AG04450 (cell line): ENCODE measurements at regions of chr5 and their contacts with region 1.

Region 1: GRCh38 chr5:174424219-174425053 is 299.9 kb upstream of the MSX2 start:
- DNase-seq: no peak
- H3K4me3 ChIP-seq: no peak overlapping the region
- H3K27ac ChIP-seq: no peak overlapping the region
- H3K27me3 ChIP-seq: peaks cover 2% of the 10 kb centered on the region
- CTCF ChIP-seq: peak; percentile 41

Region 2: DNA sequence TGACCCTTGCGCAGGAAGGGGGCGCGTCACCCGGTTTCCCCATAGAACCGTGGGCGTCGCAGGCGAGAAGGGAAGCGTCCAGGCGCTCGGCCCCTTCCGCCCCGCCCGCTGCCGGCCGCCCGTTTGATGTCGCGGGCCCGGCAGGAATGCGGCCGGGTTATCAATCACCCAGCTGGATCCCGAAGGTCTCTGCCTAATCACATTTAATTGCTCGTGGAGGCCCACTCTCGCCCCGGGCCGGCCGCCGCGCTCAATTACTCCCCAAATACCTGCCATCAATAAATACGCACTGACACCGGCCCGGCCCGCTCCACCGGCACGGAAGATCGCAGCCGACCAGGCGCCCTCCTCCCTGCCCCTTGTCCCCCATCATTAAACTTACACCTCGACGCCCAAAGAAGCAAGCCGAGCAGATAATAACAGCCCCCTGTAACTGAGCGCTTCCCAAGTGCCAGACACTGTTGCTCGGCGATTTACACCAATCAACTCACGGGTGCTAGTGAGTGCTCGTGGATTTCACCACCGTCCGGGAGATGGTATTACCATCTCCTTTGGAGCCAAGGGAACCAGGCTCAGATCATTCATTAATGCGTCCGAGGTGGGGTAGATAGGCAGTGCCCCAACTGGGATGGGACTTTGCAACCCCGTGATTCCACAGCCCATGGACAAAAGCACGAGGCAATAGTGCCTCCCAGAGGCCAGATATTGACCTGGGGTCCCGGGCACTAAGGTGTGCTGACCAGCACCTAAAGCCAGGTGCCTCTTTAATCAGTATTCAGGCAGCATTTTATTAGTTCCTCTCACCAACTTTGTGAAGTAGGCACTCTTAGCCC is 311.3 kb after region 1 on chr5:
- CTCF ChIA-PET with region 1: interaction called, 47 read pairs
- POLR2A ChIA-PET with region 1: no interaction called
- DNase-seq: no peak
- H3K4me3 ChIP-seq: peak overlapping the region; percentile 44
- H3K27ac ChIP-seq: no peak overlapping the region
- H3K27me3 ChIP-seq: peaks cover 49% of the 10 kb centered on the region
- CTCF ChIP-seq: peak; percentile 62